ENCODE measurements at regions of chr14 and their contacts with region 1.

Region 1: DNA sequence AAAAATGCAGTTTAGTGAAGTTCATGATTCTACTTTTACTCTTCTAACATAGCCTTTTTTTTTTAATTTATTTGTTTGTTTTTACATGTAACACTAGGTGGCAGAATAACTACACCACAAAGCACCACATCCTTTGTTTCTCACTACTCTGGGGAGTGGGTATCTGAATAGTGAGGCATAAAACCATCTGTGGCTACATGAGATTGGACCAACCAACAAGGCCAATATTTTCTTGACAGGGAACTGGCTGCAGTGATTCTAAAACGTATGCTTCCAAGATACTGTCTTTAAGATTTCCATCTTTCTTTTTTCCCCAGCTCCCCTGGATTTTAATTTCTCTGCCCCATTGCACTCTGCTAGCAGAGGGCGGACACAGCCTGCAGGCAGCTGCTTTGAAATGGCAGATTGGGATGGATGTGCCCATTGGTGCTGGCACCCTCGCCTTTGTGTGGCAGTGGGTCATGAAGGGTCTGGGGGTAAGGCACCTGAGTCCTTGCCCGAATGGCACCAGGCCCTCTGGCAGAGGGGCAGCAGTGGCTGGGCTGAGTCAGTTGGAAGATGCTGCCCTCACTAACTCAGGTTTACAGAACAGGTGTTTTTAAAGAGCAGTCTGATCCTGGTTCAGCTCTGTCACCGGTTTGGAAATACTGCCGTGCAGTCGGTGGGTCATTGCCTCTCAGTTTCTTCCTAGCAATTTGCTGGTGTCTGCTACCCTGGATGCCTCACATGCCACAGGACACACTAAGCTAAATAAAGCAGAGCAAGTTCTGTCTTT is 429.1 kb downstream of the RAD51B start:
- DNase-seq: no peak
- H3K4me3 ChIP-seq: no peak overlapping the region
- H3K27ac ChIP-seq: peak overlapping the region; percentile 84 to 87 (median 86)
- H3K4me1 ChIP-seq: peaks cover 64 to 82% (median 71%) of the 10 kb centered on the region in 4 donors
- H3K27me3 ChIP-seq: no peaks in the 10 kb centered on the region
- CTCF ChIP-seq: peak; percentile 53 to 84 (median 61)
- EP300 ChIP-seq: no peak
- POLR2A ChIP-seq: no peak

Region 2: GRCh38 chr14:67963960-67964744 is 284.5 kb before region 1 on chr14:
- in situ Hi-C with region 1: loop called in 1 of 4 experiments (anchors 10 kb)
- intact Hi-C with region 1: no loop called
- DNase-seq: no peak
- H3K4me3 ChIP-seq: peak overlapping the region in 1 of 4 donors; percentile 21
- H3K27ac ChIP-seq: peak overlapping the region; percentile 81 to 87 (median 85)
- H3K4me1 ChIP-seq: peaks cover 19 to 69% (median 48%) of the 10 kb centered on the region in 4 donors
- H3K27me3 ChIP-seq: no peaks in the 10 kb centered on the region
- CTCF ChIP-seq: peak in 1 of 5 experiments; percentile 8
- EP300 ChIP-seq: peak; percentile 3
- POLR2A ChIP-seq: no peak

Region 3: GRCh38 chr14:68297876-68298469 is 49.3 kb after region 1 on chr14:
- in situ Hi-C with region 1: no loop called
- intact Hi-C with region 1: no loop called
- DNase-seq: no peak
- H3K4me3 ChIP-seq: no peak overlapping the region
- H3K27ac ChIP-seq: no peak overlapping the region
- H3K4me1 ChIP-seq: peaks cover 8 to 24% (median 18%) of the 10 kb centered on the region in 4 donors
- H3K27me3 ChIP-seq: no peaks in the 10 kb centered on the region
- CTCF ChIP-seq: peak in 1 of 5 experiments; percentile 9
- EP300 ChIP-seq: no peak
- POLR2A ChIP-seq: no peak

Region 4: DNA sequence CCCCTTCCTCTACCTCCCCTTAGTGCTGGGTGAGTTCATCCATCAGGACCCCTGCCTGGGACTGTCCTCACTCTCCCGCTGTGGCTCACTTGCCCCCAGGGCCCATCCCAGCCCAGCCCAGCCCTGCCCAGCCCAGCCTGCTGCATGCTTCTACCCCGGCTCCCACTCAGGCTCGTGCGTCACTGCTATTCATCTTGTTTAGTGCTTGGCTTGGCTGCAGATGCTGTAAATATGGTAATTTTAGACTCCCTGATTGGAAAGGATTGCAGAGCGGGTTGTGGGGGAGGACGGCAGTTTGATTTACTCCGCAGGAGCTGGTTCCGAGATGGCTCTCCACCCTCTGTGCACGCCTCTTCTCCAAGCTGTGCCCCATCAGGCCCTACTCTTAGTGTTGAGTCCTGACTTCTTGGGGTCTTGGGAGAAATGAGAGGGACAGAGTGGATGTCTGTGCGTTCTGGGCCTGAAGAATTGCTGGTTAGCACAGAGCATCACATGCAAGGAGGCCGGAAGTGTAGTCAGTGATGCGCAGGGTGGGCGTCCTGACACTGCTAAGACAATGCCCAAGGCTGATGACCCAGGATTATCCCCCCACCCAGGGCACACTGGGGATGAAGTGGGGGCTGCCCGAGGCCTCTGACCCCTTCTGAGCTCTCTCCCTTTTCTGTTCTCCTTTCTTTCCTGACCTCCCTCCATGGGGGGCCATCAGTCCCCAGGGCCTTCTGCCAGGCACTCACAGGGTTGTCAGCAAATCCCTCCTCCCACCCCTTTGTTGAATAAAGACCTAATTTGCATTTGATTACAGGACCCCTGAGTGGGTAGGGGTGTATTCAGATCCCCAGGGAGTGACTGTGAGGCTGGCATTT is 299.8 kb after region 1 on chr14:
- in situ Hi-C with region 1: no loop called
- intact Hi-C with region 1: loop called (anchors 10 kb)
- DNase-seq: peak; percentile 78
- H3K4me3 ChIP-seq: no peak overlapping the region
- H3K27ac ChIP-seq: peak overlapping the region; percentile 87 to 92 (median 90)
- H3K4me1 ChIP-seq: peaks cover 24 to 77% (median 46%) of the 10 kb centered on the region in 4 donors
- H3K27me3 ChIP-seq: no peaks in the 10 kb centered on the region
- CTCF ChIP-seq: no peak
- EP300 ChIP-seq: peak; percentile 97
- POLR2A ChIP-seq: no peak

Region 5: DNA sequence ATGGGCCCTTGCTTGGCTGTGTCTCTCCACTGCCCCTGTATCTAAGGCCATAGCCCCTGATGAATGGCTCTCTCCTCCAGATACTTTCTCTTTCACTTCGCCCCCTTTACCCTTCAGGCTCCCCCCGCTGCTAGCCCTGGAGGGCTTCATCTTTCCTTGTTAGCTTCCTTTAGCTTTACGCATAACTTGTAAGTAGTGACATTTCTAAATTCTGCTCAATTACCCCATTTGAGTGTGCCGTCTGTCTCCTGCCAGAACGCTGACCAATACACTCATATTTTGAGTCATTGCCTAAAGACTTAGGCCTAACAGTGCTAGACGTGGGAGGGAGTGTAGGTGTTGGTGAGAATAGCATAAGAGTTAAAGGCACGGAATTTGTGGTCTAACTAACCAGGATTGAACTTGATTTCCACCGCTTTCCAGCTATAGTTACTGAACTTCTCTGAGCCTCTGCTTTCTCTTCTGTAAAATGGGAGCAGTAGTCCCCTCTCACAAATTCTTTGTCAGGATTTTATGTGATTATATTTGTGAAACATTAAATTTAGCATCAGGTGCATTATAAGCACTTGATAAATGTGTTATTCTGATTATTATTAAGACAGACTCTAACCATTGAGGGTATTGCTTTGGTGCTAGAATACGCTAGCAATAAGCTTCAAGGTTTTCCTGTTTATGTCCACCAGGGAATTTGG is 414.9 kb after region 1 on chr14:
- in situ Hi-C with region 1: no loop called
- intact Hi-C with region 1: loop called (anchors 10 kb)
- DNase-seq: no peak
- H3K4me3 ChIP-seq: no peak overlapping the region
- H3K27ac ChIP-seq: peak overlapping the region; percentile 59 to 84 (median 75)
- H3K4me1 ChIP-seq: peaks cover 22 to 55% (median 27%) of the 10 kb centered on the region in 4 donors
- H3K27me3 ChIP-seq: no peaks in the 10 kb centered on the region
- CTCF ChIP-seq: no peak
- EP300 ChIP-seq: no peak
- POLR2A ChIP-seq: no peak

Region 6: DNA sequence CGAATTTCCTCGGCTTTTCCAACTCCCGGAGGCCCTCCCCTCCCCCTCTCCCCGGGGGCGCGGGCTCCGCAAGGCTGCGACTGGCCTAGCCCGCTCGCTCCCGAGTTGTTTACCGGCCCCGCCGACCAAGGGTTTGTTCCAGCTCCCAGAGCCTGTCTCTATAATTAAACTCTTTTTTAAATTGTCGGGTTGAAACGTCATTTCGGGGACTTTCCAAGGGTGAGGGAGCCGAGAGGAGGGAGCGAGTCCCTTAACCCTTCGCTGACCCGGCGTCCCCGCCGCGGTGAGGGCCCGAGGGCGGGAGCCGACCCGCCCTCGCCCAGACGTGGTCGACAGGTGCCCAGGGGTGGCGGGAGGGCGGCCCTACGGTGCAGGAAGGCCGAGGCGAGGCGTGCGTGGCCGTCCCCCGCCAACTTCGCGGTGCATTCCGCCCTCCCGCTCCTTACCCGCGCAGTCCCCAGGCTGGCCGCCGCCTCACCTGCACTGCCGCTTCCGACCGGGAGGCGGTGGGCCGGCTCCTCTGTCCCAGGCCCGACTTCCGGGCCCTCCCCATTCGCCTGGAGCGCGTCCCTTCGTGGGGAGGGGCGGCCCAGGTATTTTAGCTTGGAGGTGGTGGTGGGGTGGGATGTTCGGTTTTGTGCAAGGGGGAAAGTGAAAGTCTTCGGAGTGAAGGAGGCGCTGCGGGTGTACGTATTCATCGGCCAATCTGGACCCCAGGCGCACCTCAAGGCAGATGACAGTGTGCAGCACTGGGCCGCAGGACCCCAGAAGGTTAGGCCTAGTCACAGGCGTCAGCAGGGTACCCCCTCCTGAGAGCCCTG is 547.1 kb after region 1 on chr14:
- in situ Hi-C with region 1: loop called in 1 of 4 experiments (anchors 25 kb)
- intact Hi-C with region 1: loop called (anchors 5 kb)
- DNase-seq: peak; percentile 87
- H3K4me3 ChIP-seq: peak overlapping the region; percentile 55 to 86 (median 70)
- H3K27ac ChIP-seq: peak overlapping the region; percentile 97 to 100 (median 98)
- H3K4me1 ChIP-seq: peaks cover 8 to 12% (median 8%) of the 10 kb centered on the region in 4 donors
- H3K27me3 ChIP-seq: no peaks in the 10 kb centered on the region
- CTCF ChIP-seq: peak; percentile 90 to 99 (median 91)
- EP300 ChIP-seq: no peak
- POLR2A ChIP-seq: peak; percentile 94

Region 7: GRCh38 chr14:68824517-68825347 is 576.1 kb after region 1 on chr14:
- in situ Hi-C with region 1: loop called in 3 of 4 experiments (anchors 10 to 25 kb)
- intact Hi-C with region 1: no loop called
- DNase-seq: peak; percentile 87
- H3K4me3 ChIP-seq: no peak overlapping the region
- H3K27ac ChIP-seq: no peak overlapping the region
- H3K4me1 ChIP-seq: peaks cover under 1 to 10% (median 4%) of the 10 kb centered on the region in 4 donors
- H3K27me3 ChIP-seq: no peaks in the 10 kb centered on the region
- CTCF ChIP-seq: peak; percentile 79 to 86 (median 81)
- EP300 ChIP-seq: no peak
- POLR2A ChIP-seq: no peak

Measured in transverse colon (tissue), 4 donors.